ENCODE measurements at regions of chr16 and their contacts with region 1.

Region 1: DNA sequence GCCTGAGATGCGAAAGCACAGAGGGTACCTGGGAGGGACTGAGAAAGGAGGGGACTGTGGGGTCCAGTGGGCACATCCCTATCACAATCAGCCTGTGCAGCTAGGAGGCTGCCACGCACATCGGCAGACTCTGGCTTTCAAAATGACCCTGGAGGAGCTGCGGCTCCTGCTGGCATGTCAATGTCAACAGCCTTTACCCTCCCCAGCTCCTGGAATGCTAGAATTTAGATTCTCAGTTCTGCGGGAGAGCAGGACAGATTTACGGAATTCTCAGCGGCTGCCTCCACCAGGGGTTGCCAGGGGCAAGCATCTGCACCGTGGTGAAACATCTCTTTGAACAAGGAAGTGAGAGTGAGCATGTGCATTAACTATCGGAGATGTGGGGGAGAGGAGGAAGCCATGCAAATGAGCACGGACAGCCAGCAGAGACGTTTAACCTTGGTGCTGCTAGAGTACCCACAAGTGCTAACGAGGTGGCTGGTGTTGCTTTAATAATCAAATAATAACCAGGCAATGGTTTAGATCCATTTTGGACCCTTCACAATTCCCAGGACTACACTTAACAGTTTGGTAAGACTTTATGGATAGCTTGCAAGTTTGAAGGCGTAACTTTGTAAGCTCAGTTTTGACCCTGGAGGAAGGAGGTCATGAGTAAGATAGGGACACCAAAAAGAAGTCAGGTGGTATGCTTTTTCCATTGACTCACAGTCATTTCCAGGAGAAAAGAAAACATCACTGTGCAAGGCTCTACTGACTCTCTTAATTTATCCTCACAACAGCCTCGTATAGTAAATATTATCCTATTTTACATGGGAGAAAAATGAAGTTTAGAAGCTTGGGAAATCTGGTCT is 54.1 kb downstream of the XYLT1 start:
- DNase-seq: peak in 5 of 10 donors; percentile 15 to 86 (median 30)

Region 2: GRCh38 chr16:17277977-17278381 is 138.7 kb before region 1 on chr16:
- intact Hi-C with region 1: loop called (anchors 5 kb)
- DNase-seq: peak in 8 of 10 donors; percentile 24 to 91 (median 52)

Region 3: GRCh38 chr16:17369421-17370222 is 47.1 kb before region 1 on chr16:
- intact Hi-C with region 1: loop called (anchors 5 kb)
- DNase-seq: peak in 5 of 10 donors; percentile 27 to 85 (median 35)

Region 4: DNA sequence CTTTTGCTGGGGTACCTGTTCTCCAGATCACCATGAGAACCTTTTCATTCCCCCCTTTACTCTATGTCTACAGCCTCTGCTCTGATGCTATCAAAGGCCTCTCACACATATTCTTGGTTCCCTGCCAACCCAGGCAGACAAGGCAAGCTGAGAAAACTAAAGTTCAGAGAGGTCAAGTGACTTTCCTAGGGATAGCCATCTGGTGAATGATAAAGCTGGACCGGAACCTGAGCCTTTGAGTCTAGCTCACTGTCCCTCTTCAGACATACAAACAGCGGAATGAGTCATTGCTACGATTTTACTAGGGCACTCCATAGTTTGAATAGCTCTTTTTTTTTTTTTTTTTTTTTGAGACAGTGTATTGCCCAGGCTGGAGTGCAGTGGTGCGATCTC is 19.2 kb before region 1 on chr16:
- intact Hi-C with region 1: no loop called
- DNase-seq: no peak

Region 5: DNA sequence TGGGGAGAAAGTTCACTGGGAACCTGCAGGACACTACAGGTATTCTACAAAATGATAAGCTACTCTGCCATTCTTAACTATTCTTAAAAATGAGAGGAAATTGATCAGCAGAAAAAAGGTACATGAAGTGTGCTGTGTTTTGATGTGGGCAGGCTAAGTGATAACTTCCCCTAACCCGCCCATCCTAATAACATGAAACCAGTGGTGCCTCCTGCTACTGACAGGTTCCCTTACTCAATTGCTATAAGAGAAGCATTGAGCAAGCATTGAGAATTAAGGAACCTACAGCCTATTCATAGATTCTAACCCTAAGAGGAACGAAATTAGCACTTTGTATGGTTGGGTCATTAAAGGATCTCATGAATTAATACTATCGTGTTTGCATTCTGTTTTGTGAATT is 35.2 kb after region 1 on chr16:
- intact Hi-C with region 1: loop called (anchors 5 kb)
- DNase-seq: no peak

Region 6: GRCh38 chr16:17467923-17468540 is 51.3 kb after region 1 on chr16:
- intact Hi-C with region 1: loop called (anchors 5 kb)
- DNase-seq: peak; percentile 68 to 97 (median 85)